Breast epithelium (tissue), 4 donors: ENCODE measurements at regions of chr2 and their contacts with region 1.

Region 1: GRCh38 chr2:147297820-147298219 is 547.0 kb upstream of the ACVR2A start:
- DNase-seq: no peak
- H3K4me3 ChIP-seq: no peak overlapping the region
- H3K27ac ChIP-seq: no peak overlapping the region
- H3K4me1 ChIP-seq: peaks cover 0 to 5% of the 10 kb centered on the region in 2 donors
- H3K27me3 ChIP-seq: no peaks in the 10 kb centered on the region
- CTCF ChIP-seq: no peak
- POLR2A ChIP-seq: no peak

Region 2: GRCh38 chr2:145931781-145932352 is 1366.0 kb before region 1 on chr2:
- intact Hi-C with region 1: no loop called
- DNase-seq: no peak
- H3K4me3 ChIP-seq: no peak overlapping the region
- H3K27ac ChIP-seq: no peak overlapping the region
- H3K4me1 ChIP-seq: no peaks in the 10 kb centered on the region
- H3K27me3 ChIP-seq: no peaks in the 10 kb centered on the region
- CTCF ChIP-seq: no peak
- POLR2A ChIP-seq: no peak

Region 3: DNA sequence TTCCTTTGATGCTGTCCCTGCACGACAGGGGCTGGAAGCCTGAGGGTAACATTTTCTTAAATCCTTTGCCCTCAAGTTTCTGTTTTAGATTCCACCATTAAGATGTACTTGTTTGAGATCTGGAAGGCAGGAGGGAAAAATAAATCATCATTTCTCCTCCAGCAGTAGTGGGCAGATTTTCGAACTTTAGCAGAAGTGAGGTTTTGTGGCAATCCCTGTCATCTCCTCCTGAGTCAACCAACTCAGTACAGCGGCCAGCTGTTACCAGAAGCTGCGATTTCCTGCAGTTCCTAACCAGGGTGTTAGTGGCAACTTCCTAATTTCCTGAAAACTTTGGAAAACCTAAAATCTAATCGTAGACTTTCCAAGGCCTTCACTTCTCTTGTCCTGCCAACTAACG is 29.8 kb after region 1 on chr2:
- intact Hi-C with region 1: loop called (anchors 2 kb)
- DNase-seq: no peak
- H3K4me3 ChIP-seq: no peak overlapping the region
- H3K27ac ChIP-seq: no peak overlapping the region
- H3K4me1 ChIP-seq: no peaks in the 10 kb centered on the region
- H3K27me3 ChIP-seq: no peaks in the 10 kb centered on the region
- CTCF ChIP-seq: no peak
- POLR2A ChIP-seq: no peak

Region 4: DNA sequence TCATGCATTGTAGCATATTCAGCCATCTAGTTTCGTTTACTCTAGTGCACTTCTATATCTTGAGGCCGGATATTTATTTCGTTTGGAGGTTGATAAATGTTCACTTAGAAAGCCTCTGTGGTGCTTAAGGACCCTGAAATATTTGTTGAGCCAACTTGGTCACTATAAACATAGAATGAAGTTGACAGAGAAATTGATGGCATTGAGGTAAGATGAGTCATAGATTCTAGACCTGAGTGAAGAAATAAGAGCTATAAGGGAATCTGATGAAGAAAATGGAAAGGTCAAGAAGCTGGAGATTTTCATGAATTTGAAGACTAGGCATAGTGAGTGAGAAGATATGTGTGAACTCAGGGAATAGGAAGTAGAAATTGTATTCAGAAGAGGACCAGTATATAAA is 1382.6 kb after region 1 on chr2:
- intact Hi-C with region 1: loop called (anchors 10 kb)
- DNase-seq: no peak
- H3K4me3 ChIP-seq: no peak overlapping the region
- H3K27ac ChIP-seq: no peak overlapping the region
- H3K4me1 ChIP-seq: no peaks in the 10 kb centered on the region
- H3K27me3 ChIP-seq: no peaks in the 10 kb centered on the region
- CTCF ChIP-seq: no peak
- POLR2A ChIP-seq: no peak